ENCODE measurements at regions of chr19 and their contacts with region 1.

Region 1: DNA sequence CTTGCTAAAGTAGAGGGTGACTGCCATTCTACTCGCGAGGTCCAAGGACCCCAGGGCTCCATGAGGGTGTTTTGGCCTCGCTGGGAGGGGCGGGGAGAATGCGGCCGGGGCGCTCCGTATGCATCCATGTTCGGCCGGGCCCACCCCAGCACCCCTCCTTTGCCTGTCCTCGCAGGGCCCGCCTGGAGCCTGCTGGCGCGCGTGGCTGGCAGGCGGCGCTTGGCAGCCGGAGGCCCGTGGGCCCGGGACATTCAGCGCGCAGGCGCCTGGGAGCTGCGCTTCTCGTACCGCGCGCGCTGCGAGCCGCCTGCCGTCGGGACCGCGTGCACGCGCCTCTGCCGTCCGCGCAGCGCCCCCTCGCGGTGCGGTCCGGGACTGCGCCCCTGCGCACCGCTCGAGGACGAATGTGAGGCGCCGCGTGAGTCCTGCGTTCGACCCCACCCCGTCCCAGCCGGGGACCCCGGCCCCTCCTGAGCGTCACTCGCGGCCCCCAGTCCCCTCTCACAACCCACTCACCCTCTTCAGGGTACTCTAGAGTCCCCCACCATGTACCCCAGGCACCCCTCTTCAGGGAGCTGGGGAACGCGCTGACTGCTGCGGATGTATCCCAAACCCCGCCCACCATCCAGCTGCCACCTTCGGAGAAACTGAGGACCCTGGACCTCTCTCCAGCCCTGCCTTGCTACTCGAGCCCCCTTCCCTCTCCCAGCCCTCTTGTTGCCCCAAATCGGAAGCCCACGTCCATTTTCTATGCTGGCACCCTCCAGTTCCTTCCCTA is 4.1 kb downstream of the DLL3 start:
- H3K4me3 ChIP-seq: no peak overlapping the region
- H3K27ac ChIP-seq: no peak overlapping the region
- H3K4me1 ChIP-seq: peaks cover 19% of the 10 kb centered on the region
- CTCF ChIP-seq: peak; percentile 71

Region 2: DNA sequence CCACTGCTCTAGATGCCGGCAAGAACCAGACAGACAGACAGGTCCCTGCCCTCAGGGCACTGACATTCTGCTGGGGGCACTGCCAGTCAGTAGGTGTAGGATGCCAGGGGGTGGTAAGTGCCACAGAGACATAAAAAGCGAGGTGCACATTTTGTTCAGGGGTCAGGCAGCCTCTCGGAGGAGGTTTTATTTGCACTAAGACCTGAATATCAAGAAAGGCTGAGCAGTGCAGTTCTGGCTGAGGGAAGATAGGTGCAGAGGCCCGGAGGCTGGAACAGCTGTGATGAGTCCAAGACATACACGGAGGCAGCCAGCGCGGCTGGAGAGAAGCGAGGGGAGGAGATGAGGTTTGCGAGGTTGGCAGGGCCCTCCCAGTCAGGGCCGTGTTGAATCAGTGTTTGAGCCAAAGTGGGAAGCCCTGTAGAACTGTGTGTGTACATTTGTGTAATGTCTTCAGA is 342.5 kb before region 1 on chr19:
- CTCF ChIA-PET with region 1: no interaction called
- POLR2A ChIA-PET with region 1: no interaction called
- H3K4me3 ChIP-seq: no peak overlapping the region
- H3K27ac ChIP-seq: peak overlapping the region; percentile 21; the same call in 1 of the 2 replicates
- H3K4me1 ChIP-seq: peaks cover 16% of the 10 kb centered on the region
- CTCF ChIP-seq: no peak

Region 3: GRCh38 chr19:39480337-39481228 is 22.2 kb before region 1 on chr19 and contains the start of gene TIMM50:
- CTCF ChIA-PET with region 1: interaction called, 9 read pairs
- POLR2A ChIA-PET with region 1: interaction called, 11 read pairs
- H3K4me3 ChIP-seq: peak within 1 kb of the TSS; percentile 65
- H3K27ac ChIP-seq: peak within 1 kb of the TSS; percentile 88
- H3K4me1 ChIP-seq: peaks cover 15% of the 10 kb centered on the region
- CTCF ChIP-seq: peak; percentile 96

Region 4: GRCh38 chr19:39514840-39515550 is 12.2 kb after region 1 on chr19 and contains the start of gene SELENOV:
- CTCF ChIA-PET with region 1: interaction called, 21 read pairs
- POLR2A ChIA-PET with region 1: interaction called, 3 read pairs
- H3K4me3 ChIP-seq: peak within 1 kb of the TSS; percentile 25
- H3K27ac ChIP-seq: peak within 1 kb of the TSS; percentile 16; the same call in 1 of the 2 replicates
- H3K4me1 ChIP-seq: peaks cover 17% of the 10 kb centered on the region
- CTCF ChIP-seq: peak; percentile 79

Region 5: DNA sequence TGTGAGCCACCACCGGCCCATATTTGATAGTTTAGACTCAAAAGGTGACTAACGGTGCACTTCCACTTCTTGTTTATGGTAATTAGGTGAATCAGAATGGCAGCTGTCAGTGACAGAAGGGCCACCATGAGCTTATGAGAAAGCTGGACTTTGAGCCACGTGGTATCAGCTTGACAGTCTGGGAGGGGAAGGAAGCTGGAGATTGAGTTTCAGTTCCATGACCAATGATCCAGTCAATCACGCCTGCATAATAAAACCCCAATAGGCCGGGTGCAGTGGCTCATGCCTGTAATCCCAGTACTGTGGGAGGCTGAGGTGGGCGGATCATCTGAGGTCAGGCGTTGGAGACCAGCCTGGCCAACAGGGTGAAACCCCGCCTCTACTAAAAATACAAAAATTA is 21.7 kb after region 1 on chr19:
- CTCF ChIA-PET with region 1: interaction called, 11 read pairs
- POLR2A ChIA-PET with region 1: interaction called, 5 read pairs
- H3K4me3 ChIP-seq: no peak overlapping the region
- H3K27ac ChIP-seq: no peak overlapping the region
- H3K4me1 ChIP-seq: 0 out of 2 replicates have a peak, but pooled peaks cover 4% of the 10 kb centered on the region
- CTCF ChIP-seq: no peak

Region 6: GRCh38 chr19:39532233-39533002 is 29.6 kb after region 1 on chr19 and contains the start of gene EID2B:
- CTCF ChIA-PET with region 1: interaction called, 59 read pairs
- POLR2A ChIA-PET with region 1: interaction called, 5 read pairs
- H3K4me3 ChIP-seq: peak within 1 kb of the TSS; percentile 88
- H3K27ac ChIP-seq: peak within 1 kb of the TSS; percentile 85
- H3K4me1 ChIP-seq: peaks cover 20% of the 10 kb centered on the region
- CTCF ChIP-seq: peak; percentile 100

Region 7: GRCh38 chr19:39546599-39546998 is 43.8 kb after region 1 on chr19:
- CTCF ChIA-PET with region 1: interaction called, 10 read pairs
- POLR2A ChIA-PET with region 1: no interaction called
- H3K4me3 ChIP-seq: no peak overlapping the region
- H3K27ac ChIP-seq: no peak overlapping the region
- H3K4me1 ChIP-seq: peaks cover 3% of the 10 kb centered on the region; the same call in 1 of the 2 replicates
- CTCF ChIP-seq: no peak

Region 8: DNA sequence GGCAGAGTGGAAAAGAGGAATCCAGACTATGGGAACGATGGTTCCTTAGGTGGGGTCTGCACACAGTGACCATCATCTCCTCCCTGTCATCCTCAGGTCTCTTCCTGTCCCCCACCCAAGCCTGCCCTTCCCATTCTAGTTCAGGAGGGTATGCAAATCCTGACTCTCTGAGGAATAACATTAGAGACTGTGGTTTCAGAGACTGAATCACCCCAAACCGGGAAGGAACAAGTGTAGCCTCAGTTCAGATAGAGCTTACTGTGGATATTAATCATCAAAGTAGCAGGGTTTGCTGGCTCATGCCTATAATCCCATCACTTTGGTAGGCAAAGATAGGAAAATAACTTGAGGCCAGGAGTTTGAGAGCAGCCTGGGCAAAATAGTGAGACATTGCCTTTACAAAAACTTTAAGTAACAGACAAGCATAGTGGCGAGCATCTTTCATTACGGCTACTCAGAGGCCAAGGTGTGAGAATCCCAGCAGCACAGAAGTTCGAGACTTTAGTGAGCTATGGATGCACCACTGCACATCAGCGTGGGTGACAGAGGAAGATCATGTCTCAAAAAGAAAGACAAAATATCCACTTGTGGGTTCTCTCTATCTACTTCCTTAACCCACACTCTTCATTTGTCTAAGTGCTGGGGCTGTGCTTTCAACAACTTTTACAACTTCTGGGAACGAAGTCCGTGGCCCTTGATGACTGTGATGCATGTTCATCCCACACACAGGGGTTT is 80.2 kb after region 1 on chr19:
- CTCF ChIA-PET with region 1: no interaction called
- POLR2A ChIA-PET with region 1: no interaction called
- H3K4me3 ChIP-seq: no peak overlapping the region
- H3K27ac ChIP-seq: no peak overlapping the region
- H3K4me1 ChIP-seq: no peaks in the 10 kb centered on the region
- CTCF ChIP-seq: no peak

Region 9: DNA sequence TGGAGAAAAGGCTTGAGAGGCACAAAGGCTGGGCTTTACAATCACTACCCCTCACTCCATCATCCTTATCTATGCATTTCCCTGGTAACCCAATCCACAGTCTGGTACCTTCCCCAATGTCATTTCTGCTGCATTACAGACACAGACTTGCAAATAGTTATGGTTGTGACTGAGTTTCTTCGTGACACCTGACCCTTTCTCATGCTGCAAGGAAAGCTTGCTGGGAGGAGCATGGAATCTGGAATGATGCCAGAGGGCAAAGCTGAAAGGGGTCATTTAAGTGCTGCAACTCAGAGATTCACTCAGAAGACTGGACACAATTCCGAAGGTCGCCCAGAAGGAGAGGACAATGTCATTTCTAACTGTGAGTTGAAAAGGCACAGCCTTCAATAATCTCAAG is 152.8 kb after region 1 on chr19 and contains the start of gene LGALS16:
- CTCF ChIA-PET with region 1: no interaction called
- POLR2A ChIA-PET with region 1: no interaction called
- H3K4me3 ChIP-seq: no peak within 1 kb of the TSS
- H3K27ac ChIP-seq: no peak within 1 kb of the TSS
- H3K4me1 ChIP-seq: no peaks in the 10 kb centered on the region
- CTCF ChIP-seq: no peak

Measured in HEK293 (cell line).